Activated naive CD4-positive, alpha-beta T cell treated with anti-CD3 and anti-CD28 coated beads for 36 hours (primary cell): ENCODE measurements at regions of chr9 and their contacts with region 1.

Region 1: GRCh38 chr9:37784616-37785483 is at the start of gene EXOSC3:
- DNase-seq: peak; percentile 91
- H3K4me3 Mint-ChIP-seq: peak within 1 kb of the TSS; percentile 96
- H3K27ac Mint-ChIP-seq: peak within 1 kb of the TSS; percentile 94
- H3K4me1 Mint-ChIP-seq: peaks cover 37% of the 10 kb centered on the region
- H3K27me3 Mint-ChIP-seq: no peaks in the 10 kb centered on the region
- total RNA-seq, gene EXOSC3: 93.7 to 99.7 TPM

Region 2: DNA sequence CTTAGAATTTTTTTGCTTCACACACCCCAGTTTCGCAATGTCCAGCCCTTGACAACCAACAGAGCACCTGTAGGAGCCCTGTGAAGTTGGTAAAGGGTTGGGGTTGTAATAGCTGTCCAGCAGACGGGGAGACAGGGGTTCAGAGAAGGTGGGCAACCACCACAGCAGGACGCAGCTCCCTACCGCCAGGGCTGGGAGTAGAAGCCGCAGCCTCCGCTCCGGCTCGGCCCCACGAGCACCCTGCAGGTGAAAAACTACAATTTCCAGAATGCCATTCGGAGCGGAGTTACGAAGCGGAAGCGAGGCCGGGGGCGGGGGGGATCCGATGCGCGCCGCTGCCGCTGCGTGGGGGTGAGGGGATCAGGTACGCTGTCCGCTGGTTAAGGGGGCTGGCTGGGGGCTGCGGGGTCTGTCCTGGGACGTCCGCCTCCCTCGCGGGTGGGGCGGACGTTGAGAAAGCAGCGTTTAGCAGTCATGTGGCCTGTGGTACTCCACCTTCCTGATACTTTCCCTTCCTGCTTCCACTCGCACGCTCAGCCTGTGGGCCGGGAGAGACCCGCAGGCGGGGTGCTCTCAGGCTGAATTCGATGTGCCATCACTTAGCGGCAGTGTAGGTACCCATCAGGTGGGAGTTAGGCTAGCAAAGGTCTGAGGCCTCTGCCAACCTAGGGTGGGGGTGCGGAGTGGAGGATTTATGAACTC is 31.2 kb before region 1 on chr9 and contains the start of gene TRMT10B:
- CTCF ChIA-PET with region 1: interaction called, 4 read pairs
- intact Hi-C with region 1: loop called (anchors 1 kb)
- DNase-seq: peak; percentile 77
- H3K4me3 Mint-ChIP-seq: peak within 1 kb of the TSS; percentile 96
- H3K27ac Mint-ChIP-seq: peak within 1 kb of the TSS; percentile 85
- H3K4me1 Mint-ChIP-seq: peaks cover 32% of the 10 kb centered on the region
- H3K27me3 Mint-ChIP-seq: no peaks in the 10 kb centered on the region
- total RNA-seq, gene TRMT10B: 8.1 to 9.5 TPM

Region 3: DNA sequence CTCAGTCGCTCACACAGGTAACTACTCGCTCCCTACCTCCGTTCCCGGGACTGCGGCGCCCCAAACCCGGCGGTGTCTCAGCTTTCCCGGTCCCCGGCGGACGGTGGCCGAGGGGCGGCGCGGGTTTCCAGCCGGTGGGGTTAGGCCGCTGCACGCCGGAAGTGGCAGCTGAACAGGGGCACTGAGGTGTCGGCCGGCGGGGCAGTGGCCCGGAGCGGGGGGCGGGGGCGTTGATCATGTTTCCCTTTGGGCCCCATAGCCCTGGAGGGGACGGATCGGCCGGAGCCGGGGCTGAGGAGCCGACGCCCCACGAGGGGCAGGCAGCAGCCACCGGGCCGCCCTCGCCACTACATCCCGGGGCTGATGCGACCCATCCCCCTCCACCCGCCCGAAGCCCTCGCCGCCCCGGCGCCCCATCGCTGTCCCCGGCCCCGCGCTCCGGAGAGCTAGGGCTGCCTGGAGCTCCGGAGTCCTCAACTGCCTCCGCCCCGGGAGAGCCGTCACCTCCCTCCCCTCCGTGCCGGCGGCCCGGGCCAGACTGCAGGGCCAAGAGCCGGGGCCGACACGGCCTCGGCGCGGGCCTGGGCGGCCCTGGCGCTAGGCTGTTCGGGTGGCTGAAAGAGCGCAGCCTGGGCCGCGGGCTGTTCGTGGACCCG is 15.9 kb after region 1 on chr9 and contains the start of gene DCAF10:
- CTCF ChIA-PET with region 1: no interaction called
- intact Hi-C with region 1: loop called (anchors 1 kb)
- DNase-seq: peak; percentile 89
- H3K4me3 Mint-ChIP-seq: peak within 1 kb of the TSS; percentile 93
- H3K27ac Mint-ChIP-seq: peak within 1 kb of the TSS; percentile 79
- H3K4me1 Mint-ChIP-seq: peaks cover 38% of the 10 kb centered on the region
- H3K27me3 Mint-ChIP-seq: no peaks in the 10 kb centered on the region
- total RNA-seq, gene DCAF10: 9.4 to 10.9 TPM